ENCODE measurements at regions of chr19 and their contacts with region 1.

Region 1: GRCh38 chr19:34974646-34975045 is 10.6 kb upstream of the ZNF792 start:
- DNase-seq: no peak
- ATAC-seq: no peak
- H3K4me3 ChIP-seq: no peak overlapping the region
- H3K4me3 Mint-ChIP-seq: no peak overlapping the region
- H3K27ac ChIP-seq: no peak overlapping the region
- H3K27ac Mint-ChIP-seq: no peak overlapping the region
- H3K4me1 ChIP-seq: peaks cover 13% of the 10 kb centered on the region
- H3K4me1 Mint-ChIP-seq: peaks cover 12 to 27% of the 10 kb centered on the region in 2 donors
- H3K27me3 ChIP-seq: no peaks in the 10 kb centered on the region
- H3K27me3 Mint-ChIP-seq: peaks cover 0 to 3% of the 10 kb centered on the region in 2 donors
- CTCF ChIP-seq: no peak

Region 2: GRCh38 chr19:35000651-35001424 is 26.2 kb after region 1 on chr19:
- intact Hi-C with region 1: no loop called
- DNase-seq: peak; percentile 27 to 84
- ATAC-seq: peak; percentile 33 to 58 (median 48)
- H3K4me3 ChIP-seq: peak overlapping the region; percentile 46
- H3K4me3 Mint-ChIP-seq: peak overlapping the region; percentile 95
- H3K27ac ChIP-seq: peak overlapping the region; percentile 71
- H3K27ac Mint-ChIP-seq: peak overlapping the region; percentile 83 to 93
- H3K4me1 ChIP-seq: peaks cover 78% of the 10 kb centered on the region
- H3K4me1 Mint-ChIP-seq: peaks cover 49 to 67% of the 10 kb centered on the region in 2 donors
- H3K27me3 ChIP-seq: no peaks in the 10 kb centered on the region
- H3K27me3 Mint-ChIP-seq: no peaks in the 10 kb centered on the region
- CTCF ChIP-seq: no peak

Region 3: DNA sequence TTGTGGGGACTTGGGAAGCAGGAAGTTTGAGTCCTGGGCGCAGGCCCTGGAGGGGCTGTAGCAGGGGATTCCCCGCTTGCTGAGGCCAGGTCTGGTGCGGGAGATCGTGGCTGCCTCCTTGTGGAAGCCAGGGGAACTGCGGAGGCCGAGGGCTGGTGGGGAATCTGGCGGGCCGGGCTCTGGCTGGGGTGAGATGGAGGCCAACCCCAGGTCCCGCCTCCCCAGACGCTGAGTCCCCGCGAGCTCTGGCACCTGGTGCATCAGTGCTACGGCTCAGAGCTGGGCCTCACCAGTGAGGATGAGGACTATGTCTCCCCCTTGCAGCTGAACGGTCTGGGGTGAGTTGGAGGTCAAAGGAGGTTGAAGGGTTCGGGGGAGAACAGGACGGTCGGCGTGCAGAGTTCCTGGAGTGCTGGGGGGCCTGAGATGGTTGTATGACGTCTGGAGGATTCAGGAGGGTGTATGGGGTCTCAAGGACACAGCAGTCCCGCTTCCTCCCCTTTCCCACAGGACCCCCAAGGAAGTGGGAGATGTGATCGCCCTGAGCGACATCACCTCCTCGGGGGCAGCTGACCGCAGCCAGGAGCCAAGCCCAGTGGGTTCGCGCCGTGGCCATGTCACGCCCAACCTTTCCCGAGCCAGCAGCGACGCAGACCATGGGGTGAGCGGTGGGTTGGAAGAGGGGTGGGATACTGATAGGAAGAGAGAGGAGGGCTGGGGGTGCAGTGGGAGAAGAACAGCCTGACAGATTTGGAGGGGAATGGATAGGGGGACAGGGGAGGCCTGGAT is 38.6 kb after region 1 on chr19:
- intact Hi-C with region 1: loop called (anchors 1 kb)
- DNase-seq: peak; percentile 82 to 92
- ATAC-seq: peak; percentile 75 to 81 (median 78)
- H3K4me3 ChIP-seq: no peak overlapping the region
- H3K4me3 Mint-ChIP-seq: peak overlapping the region; percentile 77
- H3K27ac ChIP-seq: peak overlapping the region; percentile 67
- H3K27ac Mint-ChIP-seq: peak overlapping the region; percentile 86 to 98
- H3K4me1 ChIP-seq: peaks cover 75% of the 10 kb centered on the region
- H3K4me1 Mint-ChIP-seq: peaks cover 52 to 65% of the 10 kb centered on the region in 2 donors
- H3K27me3 ChIP-seq: no peaks in the 10 kb centered on the region
- H3K27me3 Mint-ChIP-seq: no peaks in the 10 kb centered on the region
- CTCF ChIP-seq: peak; percentile 98

Region 4: DNA sequence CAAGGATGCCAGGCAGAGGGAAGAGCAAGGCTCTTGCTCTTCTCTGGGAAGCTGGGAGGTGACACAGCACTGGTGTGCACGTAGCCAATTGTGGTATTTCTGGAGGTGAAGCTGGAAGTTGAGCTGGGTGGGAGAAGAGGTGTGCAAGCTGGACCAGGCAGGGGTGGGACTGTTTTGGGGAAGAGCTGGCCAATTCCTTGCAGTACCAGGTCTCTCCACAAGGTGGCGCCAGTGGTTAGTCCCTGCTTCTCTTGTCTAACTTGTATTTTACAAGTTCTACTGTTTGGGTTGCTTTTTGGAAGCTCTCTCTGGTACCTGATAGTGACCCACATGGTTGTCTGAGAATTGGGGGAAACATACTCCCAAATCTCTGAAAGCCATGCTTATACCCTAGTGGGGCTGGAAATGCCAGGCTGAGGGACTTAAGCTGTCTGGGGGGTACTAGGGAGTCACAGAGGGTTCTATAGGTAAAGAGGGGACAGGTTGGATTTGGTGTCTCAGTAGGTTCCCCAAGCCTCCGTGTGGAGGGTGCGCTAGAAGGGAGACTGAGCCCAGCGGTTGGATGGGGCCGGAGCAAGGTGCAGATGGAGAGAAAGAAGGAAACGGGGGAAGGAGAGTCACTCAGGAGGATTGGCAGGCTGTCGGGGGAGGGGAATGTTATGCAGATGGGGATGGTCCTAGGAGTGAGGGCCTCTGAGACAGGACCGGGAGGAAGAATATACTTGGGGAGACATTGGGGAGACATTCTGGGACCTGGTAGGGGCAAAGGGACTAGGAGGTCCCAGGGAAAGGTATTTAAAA is 69.9 kb after region 1 on chr19:
- intact Hi-C with region 1: loop called (anchors 1 kb)
- DNase-seq: peak; percentile 54 to 77
- ATAC-seq: peak in 2 of 3 donors; percentile 40 to 41
- H3K4me3 ChIP-seq: no peak overlapping the region
- H3K4me3 Mint-ChIP-seq: peak overlapping the region; percentile 49
- H3K27ac ChIP-seq: no peak overlapping the region
- H3K27ac Mint-ChIP-seq: peak overlapping the region in 1 of 2 donors; percentile 53
- H3K4me1 ChIP-seq: peaks cover 31% of the 10 kb centered on the region
- H3K4me1 Mint-ChIP-seq: peaks cover 15 to 29% of the 10 kb centered on the region in 2 donors
- H3K27me3 ChIP-seq: no peaks in the 10 kb centered on the region
- H3K27me3 Mint-ChIP-seq: peaks cover 15 to 29% of the 10 kb centered on the region in 2 donors
- CTCF ChIP-seq: peak; percentile 98

Region 5: GRCh38 chr19:35140962-35141637 is 166.5 kb after region 1 on chr19:
- intact Hi-C with region 1: loop called (anchors 5 kb)
- DNase-seq: peak; percentile 84 to 94
- ATAC-seq: peak; percentile 84 to 95 (median 86)
- H3K4me3 ChIP-seq: peak overlapping the region; percentile 32
- H3K4me3 Mint-ChIP-seq: peak overlapping the region; percentile 76
- H3K27ac ChIP-seq: no peak overlapping the region
- H3K27ac Mint-ChIP-seq: peak overlapping the region; percentile 50 to 80
- H3K4me1 ChIP-seq: peaks cover 46% of the 10 kb centered on the region
- H3K4me1 Mint-ChIP-seq: peaks cover 22 to 50% of the 10 kb centered on the region in 2 donors
- H3K27me3 ChIP-seq: peaks cover 11% of the 10 kb centered on the region
- H3K27me3 Mint-ChIP-seq: peaks cover 0 to 23% of the 10 kb centered on the region in 2 donors
- CTCF ChIP-seq: no peak

Measured in natural killer cell (primary cell).